ENCODE measurements at regions of chr1 and their contacts with region 1.

Region 1: GRCh38 chr1:24201941-24202440 is 14.9 kb upstream of the IFNLR1 start:
- DNase-seq: peak; percentile 98
- H3K4me3 ChIP-seq: no peak overlapping the region
- H3K27ac ChIP-seq: peak overlapping the region; percentile 67 to 84
- H3K4me1 ChIP-seq: peaks cover 11% of the 10 kb centered on the region
- H3K27me3 ChIP-seq: no peaks in the 10 kb centered on the region
- CTCF ChIP-seq: peak; percentile 87 to 99 (median 97)
- POLR2A ChIP-seq: peak; percentile 34

Region 2: DNA sequence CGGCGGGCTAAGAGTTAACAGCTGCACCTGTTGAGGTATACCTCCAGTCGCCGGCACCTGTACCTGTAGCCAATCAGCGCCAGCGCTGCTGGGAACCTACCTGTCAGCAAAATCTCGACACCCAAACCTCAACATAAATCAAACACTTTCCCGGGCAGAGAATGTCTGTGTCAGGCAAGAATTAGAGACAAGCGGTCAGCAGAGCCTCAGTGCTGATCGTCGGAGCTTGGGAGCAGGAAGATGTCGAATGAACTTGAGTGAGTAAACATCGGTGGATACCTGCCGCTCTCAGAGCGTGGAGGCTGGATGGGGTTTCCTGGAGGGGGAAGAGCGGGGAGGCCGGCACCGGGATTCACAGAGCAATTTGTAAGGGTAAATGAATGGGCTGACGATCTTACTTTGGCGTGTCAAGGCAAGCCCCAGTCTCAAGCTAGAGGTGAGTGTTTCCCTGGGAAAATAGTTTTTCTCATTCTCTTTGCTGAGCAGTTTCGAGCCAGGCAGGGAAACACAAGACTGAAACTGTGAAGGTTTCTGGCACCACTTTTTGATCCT is 117.4 kb after region 1 on chr1 and contains the start of gene GRHL3:
- intact Hi-C with region 1: loop called (anchors 10 kb)
- DNase-seq: peak; percentile 73
- H3K4me3 ChIP-seq: peak within 1 kb of the TSS; percentile 11 to 13
- H3K27ac ChIP-seq: peak within 1 kb of the TSS; percentile 45 to 74
- H3K4me1 ChIP-seq: peaks cover 5% of the 10 kb centered on the region
- H3K27me3 ChIP-seq: no peaks in the 10 kb centered on the region
- CTCF ChIP-seq: no peak
- POLR2A ChIP-seq: peak; percentile 26
- total RNA-seq, gene GRHL3: 8.1 to 8.4 TPM

Region 3: DNA sequence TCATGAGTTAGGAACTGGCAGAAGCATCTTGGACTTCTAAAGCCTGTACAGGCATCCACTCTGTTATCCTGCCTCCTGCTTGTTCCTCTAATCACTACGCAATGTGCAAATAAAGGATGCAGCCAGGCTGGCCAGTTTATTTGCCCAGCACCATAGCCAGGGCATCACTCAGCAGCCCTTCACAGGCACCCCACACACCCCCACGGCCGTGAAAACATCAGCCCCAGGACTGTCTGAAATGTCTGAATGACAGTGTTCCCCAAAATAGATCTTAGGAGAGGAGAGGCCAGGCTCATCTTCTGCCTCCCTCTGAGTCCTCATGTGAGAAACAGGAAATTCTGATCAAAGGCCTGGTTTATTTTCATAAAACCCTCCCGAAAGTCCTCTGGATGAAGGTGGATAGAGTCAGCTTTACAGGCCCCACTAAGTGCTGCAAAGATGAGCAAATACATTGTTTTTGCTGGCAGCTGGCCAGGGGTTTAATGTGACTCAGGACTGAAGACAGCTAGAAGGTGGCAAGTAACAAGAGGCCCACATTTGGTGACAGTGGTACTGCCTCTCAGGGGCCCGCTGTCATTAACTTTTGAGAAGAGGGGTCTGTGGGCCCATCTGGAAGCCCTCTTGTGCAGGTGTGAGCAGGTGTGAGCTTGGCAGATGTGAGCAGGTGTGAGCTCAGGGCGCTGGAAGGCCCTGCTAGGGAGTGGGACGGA is 150.1 kb after region 1 on chr1:
- intact Hi-C with region 1: no loop called
- DNase-seq: no peak
- H3K4me3 ChIP-seq: no peak overlapping the region
- H3K27ac ChIP-seq: no peak overlapping the region
- H3K4me1 ChIP-seq: peaks cover 4% of the 10 kb centered on the region
- H3K27me3 ChIP-seq: no peaks in the 10 kb centered on the region
- CTCF ChIP-seq: no peak
- POLR2A ChIP-seq: no peak

Region 4: GRCh38 chr1:24391882-24392603 is 190.1 kb after region 1 on chr1:
- intact Hi-C with region 1: loop called (anchors 1 kb)
- DNase-seq: peak; percentile 70
- H3K4me3 ChIP-seq: peak overlapping the region in 1 of 2 donors; percentile 16
- H3K27ac ChIP-seq: peak overlapping the region; percentile 83 to 84
- H3K4me1 ChIP-seq: peaks cover 7% of the 10 kb centered on the region
- H3K27me3 ChIP-seq: no peaks in the 10 kb centered on the region
- CTCF ChIP-seq: peak; percentile 19 to 90 (median 80)
- POLR2A ChIP-seq: no peak

Region 5: DNA sequence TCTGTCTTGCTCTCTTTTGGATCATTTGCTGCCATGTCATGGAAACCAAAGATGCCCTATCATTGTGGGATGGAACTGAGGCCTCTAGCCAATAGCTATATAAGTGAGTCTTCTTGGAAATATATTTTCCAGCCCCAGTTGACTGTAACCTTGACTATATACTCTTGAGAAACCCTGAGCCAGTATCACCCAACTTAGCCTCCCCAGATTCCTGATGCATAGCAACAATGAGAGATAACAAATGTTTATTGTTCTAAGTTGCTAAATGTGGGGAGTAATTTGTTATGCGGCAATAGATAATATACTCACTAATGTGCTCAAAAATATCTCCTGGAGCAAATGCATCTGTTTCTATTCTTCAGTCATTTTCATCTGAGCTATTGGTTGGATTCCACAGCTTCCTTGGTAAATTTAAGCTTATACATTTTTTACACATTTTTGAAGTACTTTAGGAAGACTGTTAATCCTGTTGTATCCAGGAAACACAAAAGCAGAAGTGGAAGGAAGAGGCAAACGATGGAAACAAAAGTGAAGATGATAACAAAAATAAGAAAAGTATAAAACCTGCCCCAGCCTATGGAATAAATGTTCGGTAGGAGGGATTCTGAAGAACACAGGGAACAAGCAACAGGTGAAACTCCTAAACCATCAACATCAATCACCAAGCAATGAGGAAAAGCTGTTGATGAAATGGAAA is 434.8 kb after region 1 on chr1:
- intact Hi-C with region 1: loop called (anchors 2 kb)
- DNase-seq: no peak
- H3K4me3 ChIP-seq: no peak overlapping the region
- H3K27ac ChIP-seq: no peak overlapping the region
- H3K4me1 ChIP-seq: no peaks in the 10 kb centered on the region
- H3K27me3 ChIP-seq: no peaks in the 10 kb centered on the region
- CTCF ChIP-seq: no peak
- POLR2A ChIP-seq: no peak